AG04450 (cell line): ENCODE measurements at regions of chr16 and their contacts with region 1.

Region 1: GRCh38 chr16:68264128-68265077 is at the start of gene SLC7A6:
- DNase-seq: no peak
- H3K4me3 ChIP-seq: peak within 1 kb of the TSS; percentile 98
- H3K27ac ChIP-seq: peak within 1 kb of the TSS; percentile 94
- H3K27me3 ChIP-seq: no peaks in the 10 kb centered on the region
- CTCF ChIP-seq: peak; percentile 73; the same call in 1 of the 2 replicates
- polyA plus RNA-seq, gene SLC7A6: 27.4 and 30.3 TPM in 2 replicates

Region 2: GRCh38 chr16:68237243-68238028 is 27.0 kb before region 1 on chr16:
- CTCF ChIA-PET with region 1: interaction called, 5 read pairs
- POLR2A ChIA-PET with region 1: interaction called, 13 read pairs
- DNase-seq: peak; percentile 94
- H3K4me3 ChIP-seq: peak overlapping the region; percentile 69
- H3K27ac ChIP-seq: peak overlapping the region; percentile 94
- H3K27me3 ChIP-seq: no peaks in the 10 kb centered on the region
- CTCF ChIP-seq: no peak

Region 3: DNA sequence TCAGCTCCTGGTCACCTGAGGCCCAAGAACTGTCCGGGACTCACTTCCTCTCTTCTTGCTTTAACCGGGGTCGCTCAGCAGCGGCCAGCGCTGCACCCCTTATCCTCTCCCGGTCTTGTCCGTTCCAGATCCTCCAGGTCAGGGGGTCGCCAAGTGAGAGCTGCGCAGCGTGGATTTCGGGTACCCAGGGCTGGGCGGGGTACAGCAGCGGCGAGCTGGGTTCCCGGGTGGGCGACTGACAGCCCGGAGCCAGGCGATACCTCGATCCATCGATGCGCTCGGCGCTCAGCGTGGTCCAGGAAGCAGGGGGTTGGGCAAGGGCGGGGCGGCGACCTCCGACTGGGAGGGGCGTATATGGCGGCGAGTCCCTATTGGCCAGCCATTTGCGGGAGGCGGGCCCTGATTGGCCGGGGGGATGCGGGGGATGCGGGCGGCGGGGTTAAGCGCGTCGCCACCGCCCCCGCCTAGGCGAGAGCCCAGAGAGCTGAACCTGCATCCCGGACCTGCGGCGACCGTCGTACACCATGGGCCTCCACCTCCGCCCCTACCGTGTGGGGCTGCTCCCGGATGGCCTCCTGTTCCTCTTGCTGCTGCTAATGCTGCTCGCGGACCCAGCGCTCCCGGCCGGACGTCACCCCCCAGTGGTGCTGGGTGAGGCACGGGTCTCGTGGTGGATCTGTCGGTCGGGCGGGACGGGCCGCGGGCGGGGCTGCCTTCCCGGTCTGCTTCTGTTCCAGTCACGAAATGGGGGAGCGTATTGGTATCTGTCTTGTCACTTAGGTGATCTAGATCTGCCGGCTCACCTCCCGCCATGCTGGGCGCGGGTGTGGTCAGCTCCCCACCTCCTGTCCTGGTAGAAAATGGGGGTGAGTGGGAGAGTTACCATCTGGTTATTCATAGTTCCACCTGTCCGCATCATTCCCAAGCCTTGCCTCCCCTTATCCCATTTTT is 19.2 kb before region 1 on chr16 and contains the start of gene PLA2G15:
- CTCF ChIA-PET with region 1: interaction called, 10 read pairs
- POLR2A ChIA-PET with region 1: interaction called, 9 read pairs
- DNase-seq: peak; percentile 88
- H3K4me3 ChIP-seq: peak within 1 kb of the TSS; percentile 95
- H3K27ac ChIP-seq: no peak within 1 kb of the TSS
- H3K27me3 ChIP-seq: no peaks in the 10 kb centered on the region
- CTCF ChIP-seq: no peak
- polyA plus RNA-seq, gene PLA2G15: 15.7 and 18.7 TPM in 2 replicates

Region 4: DNA sequence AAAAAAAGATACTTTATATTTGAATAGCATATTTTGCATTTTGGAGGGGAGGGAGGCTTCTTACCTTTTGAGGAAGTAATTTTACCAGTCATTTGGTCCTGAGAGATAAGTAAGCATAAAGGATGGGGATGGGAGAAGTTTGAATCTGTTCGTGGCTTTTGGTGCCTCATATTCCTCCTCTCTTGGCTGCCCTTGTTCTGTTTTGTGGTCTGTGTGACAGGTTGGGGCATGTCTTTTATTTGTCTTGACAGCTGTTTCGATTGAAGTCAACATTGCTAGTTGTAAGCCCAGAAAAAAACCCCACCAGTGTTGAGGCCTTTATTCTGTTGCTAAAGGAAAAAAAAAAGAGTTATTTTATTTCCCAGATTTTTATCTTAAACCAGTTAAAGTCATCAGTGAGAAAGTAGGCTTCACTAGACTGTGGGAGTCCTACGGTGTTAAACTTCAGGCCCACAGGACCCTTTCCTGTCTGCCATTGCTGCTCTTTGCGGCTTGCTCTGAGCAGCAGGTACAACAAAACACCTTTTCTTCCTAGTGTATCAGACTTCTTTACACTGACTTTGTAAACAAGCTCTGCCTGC is 11.3 kb after region 1 on chr16:
- CTCF ChIA-PET with region 1: interaction called, 12 read pairs
- POLR2A ChIA-PET with region 1: no interaction called
- DNase-seq: no peak
- H3K4me3 ChIP-seq: no peak overlapping the region
- H3K27ac ChIP-seq: peak overlapping the region; percentile 21
- H3K27me3 ChIP-seq: no peaks in the 10 kb centered on the region
- CTCF ChIP-seq: no peak

Region 5: GRCh38 chr16:68310761-68311511 is 46.5 kb after region 1 on chr16 and contains the starts of genes PRMT7 and SLC7A6OS:
- CTCF ChIA-PET with region 1: interaction called, 13 read pairs
- POLR2A ChIA-PET with region 1: interaction called, 19 read pairs
- DNase-seq: peak; percentile 54
- H3K4me3 ChIP-seq: peak within 1 kb of the TSS; percentile 99
- H3K27ac ChIP-seq: peak within 1 kb of the TSS; percentile 81
- H3K27me3 ChIP-seq: no peaks in the 10 kb centered on the region
- CTCF ChIP-seq: no peak
- polyA plus RNA-seq, gene PRMT7: 26.2 and 32.4 TPM in 2 replicates
- polyA plus RNA-seq, gene SLC7A6OS: 8.5 and 10.9 TPM in 2 replicates

Region 6: DNA sequence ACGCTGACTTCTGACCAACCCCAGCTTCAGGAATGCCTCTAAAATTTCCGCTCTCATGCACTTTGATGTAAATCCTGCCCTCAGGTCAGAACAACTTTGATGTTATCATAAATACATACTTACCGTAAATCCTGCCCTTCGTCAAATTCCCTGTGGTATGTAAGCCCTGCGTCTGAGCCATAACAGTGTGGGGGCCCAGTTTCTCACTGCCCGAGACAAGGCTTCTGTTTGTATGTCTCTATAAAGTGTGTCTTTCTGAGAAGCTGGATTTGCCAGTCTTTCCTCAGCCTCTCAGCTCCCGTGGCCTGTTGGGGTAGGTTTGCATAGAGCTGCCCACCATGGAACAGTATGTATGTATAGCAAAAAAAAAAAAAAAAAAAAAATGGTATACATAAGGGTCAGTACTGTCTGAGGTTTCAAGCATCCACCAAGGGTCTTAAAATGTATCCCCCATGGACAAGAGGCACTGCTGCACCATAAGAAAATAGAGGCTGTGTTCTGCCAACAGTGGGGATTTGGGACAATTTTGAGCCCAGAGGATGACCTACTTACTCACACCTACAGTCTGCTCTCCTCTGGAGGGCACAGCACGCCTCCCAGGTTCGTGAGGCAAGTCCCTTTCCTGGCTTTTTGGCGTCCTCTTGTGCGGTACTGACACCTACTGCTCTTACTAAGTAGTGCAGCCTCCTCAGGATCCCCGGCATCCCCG is 63.9 kb after region 1 on chr16:
- CTCF ChIA-PET with region 1: interaction called, 158 read pairs
- POLR2A ChIA-PET with region 1: interaction called, 3 read pairs
- DNase-seq: peak; percentile 67
- H3K4me3 ChIP-seq: no peak overlapping the region
- H3K27ac ChIP-seq: no peak overlapping the region
- H3K27me3 ChIP-seq: no peaks in the 10 kb centered on the region
- CTCF ChIP-seq: peak; percentile 95

Region 7: DNA sequence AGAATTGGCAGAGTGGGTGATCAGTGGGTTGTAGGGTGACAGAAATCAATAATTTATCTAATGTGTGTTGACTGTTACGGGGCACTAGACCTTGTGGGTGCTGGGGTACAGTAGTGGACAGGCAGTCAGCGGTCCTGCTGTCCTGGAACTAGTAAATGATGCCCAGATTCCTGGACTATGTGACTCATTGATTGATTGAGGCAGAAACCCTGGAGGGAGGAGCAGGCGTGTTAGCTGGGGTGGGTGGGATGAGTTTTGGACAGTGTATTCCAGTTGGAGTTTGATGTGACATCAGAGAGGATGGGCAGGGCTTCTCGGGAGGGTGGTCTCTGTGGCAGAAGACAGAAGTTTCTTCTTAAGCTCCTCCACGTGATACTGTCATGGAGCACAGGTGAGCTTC is 70.8 kb after region 1 on chr16:
- CTCF ChIA-PET with region 1: interaction called, 158 read pairs
- POLR2A ChIA-PET with region 1: no interaction called
- DNase-seq: no peak
- H3K4me3 ChIP-seq: no peak overlapping the region
- H3K27ac ChIP-seq: no peak overlapping the region
- H3K27me3 ChIP-seq: no peaks in the 10 kb centered on the region
- CTCF ChIP-seq: no peak

Region 8: DNA sequence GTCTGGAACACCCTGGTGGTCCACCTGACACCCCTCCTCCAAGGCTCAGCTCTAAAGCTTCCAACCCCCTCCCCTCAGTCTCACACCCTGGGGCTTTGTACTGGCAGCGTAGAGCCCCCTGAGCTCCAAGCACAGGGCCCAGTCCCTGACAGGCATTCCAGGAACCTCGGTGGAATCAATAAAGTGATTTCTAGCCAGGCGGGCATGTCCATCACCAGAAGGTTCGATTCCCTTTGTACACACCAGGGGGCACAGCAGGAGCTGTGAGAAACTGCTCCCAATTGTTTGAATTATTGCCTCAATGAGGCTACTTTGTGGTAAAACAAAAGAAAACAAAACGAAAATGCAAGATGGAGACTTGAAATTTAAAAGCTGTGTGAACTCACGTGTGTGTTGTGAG is 132.1 kb after region 1 on chr16:
- CTCF ChIA-PET with region 1: no interaction called
- POLR2A ChIA-PET with region 1: no interaction called
- DNase-seq: peak; percentile 16
- H3K4me3 ChIP-seq: no peak overlapping the region
- H3K27ac ChIP-seq: no peak overlapping the region
- H3K27me3 ChIP-seq: peaks cover 24% of the 10 kb centered on the region
- CTCF ChIP-seq: peak; percentile 74